ENCODE measurements at regions of chr7 and their contacts with region 1.

Region 1: DNA sequence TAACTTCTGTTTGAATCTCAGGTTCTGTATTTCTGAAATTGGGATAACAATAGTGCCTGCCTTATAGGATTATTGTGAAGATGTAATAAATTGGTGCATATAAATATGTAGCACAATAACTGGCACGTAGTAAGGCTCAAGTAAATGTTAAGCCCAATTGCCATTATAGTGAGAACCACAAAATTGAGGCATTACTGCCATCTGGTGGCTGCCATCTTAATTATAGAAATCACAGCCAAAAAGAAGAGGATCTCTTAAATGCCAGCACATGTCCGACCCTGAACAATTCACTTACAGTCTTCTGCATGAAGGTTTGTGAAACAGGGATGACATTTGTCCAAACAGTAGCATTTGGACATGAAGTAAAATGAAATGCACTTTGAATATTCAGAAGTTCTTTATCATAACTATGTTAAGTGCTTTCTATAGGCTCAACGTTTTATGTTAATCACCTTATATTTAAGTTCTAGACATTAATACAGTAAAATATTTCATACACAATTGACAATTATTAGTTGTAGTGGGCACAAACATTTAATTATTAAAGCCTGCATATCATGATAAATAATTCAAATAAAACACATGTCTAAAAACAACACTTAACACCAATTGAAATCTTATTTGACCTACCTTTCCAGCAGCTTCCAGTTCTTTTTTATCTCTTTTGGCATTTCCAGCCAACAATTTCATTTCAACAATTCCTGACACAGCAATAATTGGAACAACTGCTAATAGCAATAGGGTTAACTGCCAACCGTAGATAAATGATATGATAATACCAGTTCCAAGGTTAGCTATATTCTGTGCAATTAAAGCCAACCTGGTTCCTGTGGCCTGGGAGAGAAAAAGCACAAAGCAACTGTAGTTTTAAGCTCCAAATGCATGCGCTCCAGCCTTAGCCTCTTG is 58.5 kb downstream of the ABCB4 start:
- DNase-seq: peak; percentile 31 to 67 (median 47)
- H3K4me3 ChIP-seq: no peak overlapping the region
- H3K27ac ChIP-seq: no peak overlapping the region
- H3K4me1 ChIP-seq: no peaks in the 10 kb centered on the region
- H3K27me3 ChIP-seq: no peaks in the 10 kb centered on the region
- CTCF ChIP-seq: peak; percentile 11 to 73 (median 62)
- EP300 ChIP-seq: no peak
- POLR2A ChIP-seq: no peak

Region 2: GRCh38 chr7:87312215-87312865 is 104.6 kb before region 1 on chr7:
- intact Hi-C with region 1: loop called (anchors 2 to 5 kb)
- DNase-seq: peak; percentile 24 to 60 (median 52)
- H3K4me3 ChIP-seq: no peak overlapping the region
- H3K27ac ChIP-seq: no peak overlapping the region
- H3K4me1 ChIP-seq: no peaks in the 10 kb centered on the region
- H3K27me3 ChIP-seq: no peaks in the 10 kb centered on the region
- CTCF ChIP-seq: peak; percentile 78 to 84 (median 79)
- EP300 ChIP-seq: no peak
- POLR2A ChIP-seq: no peak

Measured in ovary (tissue), 10 donors.